ENCODE measurements at regions of chr6 and their contacts with region 1.

Region 1: DNA sequence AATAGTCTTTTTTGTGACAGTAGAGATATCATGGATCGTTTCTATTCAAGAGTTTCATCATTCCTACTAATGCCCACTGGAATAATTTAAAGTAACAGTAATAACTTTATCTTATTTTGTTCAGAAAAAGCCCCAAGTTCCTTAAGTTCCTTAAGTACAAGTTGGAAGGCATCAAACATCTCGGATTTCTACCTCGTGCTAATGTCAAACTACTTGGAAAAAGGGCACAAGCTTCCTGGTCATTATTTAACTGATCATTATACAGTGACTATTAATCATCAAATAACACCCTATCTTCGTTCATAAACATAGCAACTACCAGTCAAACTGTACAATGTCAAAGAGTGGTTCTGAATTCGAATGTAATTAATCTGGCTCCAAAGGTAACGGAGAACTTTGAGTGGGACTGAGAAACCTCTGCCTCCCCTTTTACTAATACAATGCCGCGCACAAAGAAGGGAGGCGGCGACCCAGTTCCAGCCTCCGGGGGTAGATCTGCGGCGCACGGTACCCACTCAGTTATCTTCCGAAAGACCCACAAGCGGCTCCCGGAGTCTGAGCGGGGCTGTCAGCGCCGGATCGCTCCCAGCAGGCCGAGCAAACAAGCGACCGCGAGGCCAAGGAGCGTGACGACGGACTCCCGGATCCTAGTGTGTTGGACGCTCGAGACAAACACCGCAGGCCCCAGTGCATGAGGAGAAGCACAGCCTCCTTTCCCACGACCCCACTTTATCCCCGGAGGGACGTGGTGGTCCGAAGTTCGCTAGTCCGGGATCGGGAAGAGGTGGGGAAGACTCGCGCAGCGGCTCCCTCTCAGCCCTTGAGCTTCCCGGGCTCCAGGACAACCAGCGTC is 716 bp downstream of the SHPRH start:
- DNase-seq: peak; percentile 57
- ATAC-seq: peak; percentile 28
- H3K4me3 Mint-ChIP-seq: peak overlapping the region; percentile 96
- H3K27ac Mint-ChIP-seq: peak overlapping the region; percentile 92
- H3K4me1 Mint-ChIP-seq: peaks cover 46% of the 10 kb centered on the region
- H3K27me3 Mint-ChIP-seq: no peaks in the 10 kb centered on the region
- CTCF ChIP-seq: no peak

Region 2: DNA sequence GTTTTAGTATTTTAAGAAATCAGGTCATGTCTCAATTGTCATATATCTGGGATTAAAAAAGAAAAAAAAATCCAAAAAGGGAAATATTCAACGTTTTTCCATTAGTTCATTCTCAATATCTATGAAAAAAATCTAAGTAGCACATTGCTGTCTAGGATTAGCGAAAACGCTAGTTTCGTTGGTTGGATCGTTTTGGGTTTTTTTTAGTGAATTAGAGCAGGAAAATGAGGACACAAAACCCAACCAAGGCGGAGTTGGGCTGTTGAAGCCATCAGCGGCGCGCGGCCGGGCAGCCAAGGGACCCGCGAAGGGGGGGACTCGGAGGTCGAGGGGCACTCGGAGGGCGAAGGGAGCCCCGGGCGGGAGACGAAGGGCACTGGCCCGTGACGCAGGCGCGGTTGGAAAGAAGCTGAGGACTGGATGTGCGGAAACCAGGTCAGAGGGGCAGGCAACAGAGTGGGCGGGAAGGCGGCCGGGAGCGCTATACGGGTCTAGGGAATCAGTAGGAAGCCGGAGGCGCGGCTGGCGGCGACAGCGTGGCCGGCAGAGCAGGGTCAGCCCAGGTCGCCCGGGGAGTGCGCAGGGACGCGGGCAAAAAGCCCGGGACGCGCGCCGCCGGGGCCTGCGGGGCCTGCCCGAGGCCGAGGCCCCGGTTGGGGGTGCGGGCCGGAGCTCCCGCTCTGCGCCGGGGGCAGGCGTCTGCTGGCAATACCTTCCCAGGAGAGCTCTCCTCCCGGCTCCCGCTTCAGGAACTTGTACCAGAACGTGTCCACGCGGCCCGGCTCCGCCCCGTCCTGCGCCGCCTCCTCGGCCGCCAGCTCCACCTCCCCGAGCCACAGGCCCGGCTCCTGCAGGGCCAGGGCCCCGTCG is 228.7 kb before region 1 on chr6:
- CTCF ChIA-PET with region 1: no interaction called
- POLR2A ChIA-PET with region 1: interaction called, 5 read pairs
- intact Hi-C with region 1: loop called (anchors 10 kb)
- DNase-seq: peak; percentile 87
- ATAC-seq: peak; percentile 69
- H3K4me3 Mint-ChIP-seq: peak overlapping the region; percentile 90
- H3K27ac Mint-ChIP-seq: peak overlapping the region; percentile 89
- H3K4me1 Mint-ChIP-seq: peaks cover 26% of the 10 kb centered on the region
- H3K27me3 Mint-ChIP-seq: no peaks in the 10 kb centered on the region
- CTCF ChIP-seq: no peak

Region 3: GRCh38 chr6:145823328-145823944 is 140.0 kb before region 1 on chr6:
- CTCF ChIA-PET with region 1: no interaction called
- POLR2A ChIA-PET with region 1: no interaction called
- intact Hi-C with region 1: loop called (anchors 5 kb)
- DNase-seq: peak; percentile 23
- ATAC-seq: peak; percentile 89
- H3K4me3 Mint-ChIP-seq: no peak overlapping the region
- H3K27ac Mint-ChIP-seq: peak overlapping the region; percentile 40
- H3K4me1 Mint-ChIP-seq: peaks cover 44% of the 10 kb centered on the region
- H3K27me3 Mint-ChIP-seq: no peaks in the 10 kb centered on the region
- CTCF ChIP-seq: no peak

Region 4: GRCh38 chr6:145929037-145929633 is 34.3 kb before region 1 on chr6:
- CTCF ChIA-PET with region 1: interaction called, 20 read pairs
- POLR2A ChIA-PET with region 1: no interaction called
- intact Hi-C with region 1: no loop called
- DNase-seq: no peak
- ATAC-seq: no peak
- H3K4me3 Mint-ChIP-seq: no peak overlapping the region
- H3K27ac Mint-ChIP-seq: no peak overlapping the region
- H3K4me1 Mint-ChIP-seq: no peaks in the 10 kb centered on the region
- H3K27me3 Mint-ChIP-seq: no peaks in the 10 kb centered on the region
- CTCF ChIP-seq: peak; percentile 91